A673 (cell line): ENCODE measurements at regions of chr6 and their contacts with region 1.

Region 1: GRCh38 chr6:31541658-31542521 is at the start of gene DDX39B:
- DNase-seq: peak; percentile 99
- H3K4me3 ChIP-seq: peak within 1 kb of the TSS; percentile 87
- H3K27ac ChIP-seq: peak within 1 kb of the TSS; percentile 99
- H3K4me1 ChIP-seq: peaks cover 16% of the 10 kb centered on the region
- H3K27me3 ChIP-seq: no peaks in the 10 kb centered on the region
- CTCF ChIP-seq: no peak
- total RNA-seq, gene DDX39B: 558 and 594 TPM in 2 replicates

Region 2: DNA sequence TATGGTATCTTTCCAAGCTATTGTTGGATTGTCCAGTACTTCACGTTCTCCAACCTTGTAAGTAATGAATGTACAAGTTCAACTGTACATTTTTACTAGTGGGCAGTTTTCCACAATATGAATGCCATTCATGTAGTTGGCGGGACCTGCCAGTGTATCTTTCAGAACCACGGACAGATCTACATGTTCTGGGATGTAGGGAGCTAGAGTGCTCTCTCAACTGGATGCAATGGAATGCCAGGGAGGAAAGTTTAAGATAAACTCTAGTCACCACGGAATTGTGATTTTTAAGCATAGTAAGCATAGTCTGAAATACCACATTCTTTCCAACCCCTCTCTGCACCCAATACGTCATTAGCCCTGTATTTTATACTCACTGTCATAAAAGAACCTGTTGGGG is 248.5 kb before region 1 on chr6:
- CTCF ChIA-PET with region 1: no interaction called
- POLR2A ChIA-PET with region 1: no interaction called
- intact Hi-C with region 1: no loop called
- DNase-seq: peak; percentile 49
- H3K4me3 ChIP-seq: no peak overlapping the region
- H3K27ac ChIP-seq: no peak overlapping the region
- H3K4me1 ChIP-seq: no peaks in the 10 kb centered on the region
- H3K27me3 ChIP-seq: peaks cover 73% of the 10 kb centered on the region
- CTCF ChIP-seq: no peak

Region 3: GRCh38 chr6:31453259-31453658 is 88.6 kb before region 1 on chr6:
- CTCF ChIA-PET with region 1: no interaction called
- POLR2A ChIA-PET with region 1: no interaction called
- intact Hi-C with region 1: no loop called
- DNase-seq: peak; percentile 31
- H3K4me3 ChIP-seq: no peak overlapping the region
- H3K27ac ChIP-seq: no peak overlapping the region
- H3K4me1 ChIP-seq: no peaks in the 10 kb centered on the region
- H3K27me3 ChIP-seq: no peaks in the 10 kb centered on the region
- CTCF ChIP-seq: no peak

Region 4: DNA sequence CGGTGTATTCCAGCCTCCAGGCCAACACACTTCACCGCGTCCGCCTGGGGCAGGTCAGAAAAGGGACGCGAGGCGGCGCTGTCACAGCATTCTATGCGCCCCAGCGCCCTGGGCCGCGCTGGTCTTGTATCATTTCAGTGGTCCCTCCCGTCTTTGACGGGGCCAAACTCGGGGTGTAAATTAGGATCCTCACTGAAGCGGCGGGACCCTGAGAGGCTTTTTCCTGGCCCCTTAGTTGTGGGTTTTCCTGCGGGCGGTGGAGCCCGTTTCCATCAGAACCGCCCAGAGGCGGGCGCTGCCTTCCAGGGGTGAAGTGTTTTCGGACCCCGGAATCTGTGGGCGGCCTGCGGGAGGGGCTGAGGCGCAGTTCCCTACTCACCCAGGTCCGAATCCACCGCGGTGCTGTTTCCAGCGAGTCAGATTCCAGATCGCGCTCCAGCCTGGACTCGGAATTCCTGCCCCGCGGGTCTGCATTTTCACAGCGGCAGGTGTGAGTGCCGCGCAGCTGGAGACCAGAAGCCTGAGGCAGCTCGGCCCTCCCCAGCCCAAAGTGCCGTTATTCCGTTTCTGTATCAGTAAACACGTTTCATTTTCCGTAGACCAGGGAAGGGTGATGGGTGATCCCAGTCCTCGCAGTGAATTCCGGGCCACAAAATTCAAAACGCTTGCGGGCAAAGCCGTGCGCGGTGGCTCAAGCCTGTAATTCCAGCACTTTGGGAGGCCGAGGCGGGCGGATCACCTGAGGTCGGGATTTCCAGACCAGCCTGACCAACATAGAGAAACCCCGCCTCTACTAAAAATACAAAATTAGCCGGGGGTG is 47.8 kb before region 1 on chr6:
- CTCF ChIA-PET with region 1: no interaction called
- POLR2A ChIA-PET with region 1: interaction called, 4 read pairs
- intact Hi-C with region 1: loop called (anchors 5 kb)
- DNase-seq: peak; percentile 91
- H3K4me3 ChIP-seq: peak overlapping the region; percentile 78
- H3K27ac ChIP-seq: peak overlapping the region; percentile 64
- H3K4me1 ChIP-seq: peaks cover 7% of the 10 kb centered on the region
- H3K27me3 ChIP-seq: no peaks in the 10 kb centered on the region
- CTCF ChIP-seq: peak; percentile 98

Region 5: DNA sequence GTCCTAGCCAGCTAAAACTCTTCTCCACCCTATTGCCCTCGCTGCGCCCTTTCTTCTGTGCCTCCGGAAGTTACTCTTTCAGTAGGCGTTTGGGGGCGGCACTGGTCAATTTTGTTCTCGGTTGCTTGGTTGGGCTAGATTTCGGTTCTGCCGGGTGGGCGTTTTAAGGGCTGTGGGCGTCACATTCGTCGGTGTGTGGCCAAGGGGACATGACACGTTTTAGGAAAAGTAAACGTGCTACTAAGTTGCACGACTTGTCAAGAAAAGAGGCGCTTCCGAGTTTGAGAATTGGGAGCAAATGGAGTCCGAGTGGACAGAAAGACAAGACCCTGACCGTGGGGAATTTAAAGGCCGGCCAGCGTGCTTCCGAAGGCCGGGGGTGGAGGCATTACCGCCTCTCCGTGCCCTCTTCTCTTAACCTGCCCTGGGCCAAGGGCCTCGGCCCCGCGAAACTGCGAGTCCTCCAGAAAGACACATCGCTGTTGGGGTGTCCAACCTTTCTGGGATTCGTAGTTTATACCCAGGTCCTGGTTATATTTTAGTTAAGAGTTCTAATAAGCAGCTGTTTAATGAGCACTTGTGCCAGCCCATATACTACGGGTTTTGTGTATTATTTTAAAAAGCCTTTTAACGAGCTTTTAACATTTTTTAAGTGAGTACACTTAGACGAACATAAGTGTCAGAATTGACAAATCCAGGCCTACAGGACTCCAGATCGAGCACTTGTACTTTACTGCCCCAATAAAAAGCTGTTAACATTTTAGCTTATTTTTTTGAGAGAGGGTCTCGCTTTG is 111.2 kb after region 1 on chr6:
- CTCF ChIA-PET with region 1: no interaction called
- POLR2A ChIA-PET with region 1: no interaction called
- intact Hi-C with region 1: loop called (anchors 10 kb)
- DNase-seq: peak; percentile 95
- H3K4me3 ChIP-seq: peak overlapping the region; percentile 63
- H3K27ac ChIP-seq: peak overlapping the region; percentile 97
- H3K4me1 ChIP-seq: peaks cover 14% of the 10 kb centered on the region
- H3K27me3 ChIP-seq: no peaks in the 10 kb centered on the region
- CTCF ChIP-seq: peak; percentile 30; the same call in 1 of the 2 replicates

Region 6: GRCh38 chr6:31739639-31740396 is 197.9 kb after region 1 on chr6 and contains the start of gene MSH5:
- CTCF ChIA-PET with region 1: no interaction called
- POLR2A ChIA-PET with region 1: no interaction called
- intact Hi-C with region 1: loop called (anchors 10 kb)
- DNase-seq: peak; percentile 100
- H3K4me3 ChIP-seq: peak within 1 kb of the TSS; percentile 71
- H3K27ac ChIP-seq: peak within 1 kb of the TSS; percentile 95
- H3K4me1 ChIP-seq: peaks cover 36% of the 10 kb centered on the region
- H3K27me3 ChIP-seq: no peaks in the 10 kb centered on the region
- CTCF ChIP-seq: no peak
- total RNA-seq, gene MSH5: 76.4 and 102 TPM in 2 replicates

Region 7: GRCh38 chr6:31784098-31784925 is 242.4 kb after region 1 on chr6:
- CTCF ChIA-PET with region 1: no interaction called
- POLR2A ChIA-PET with region 1: no interaction called
- intact Hi-C with region 1: no loop called
- DNase-seq: no peak
- H3K4me3 ChIP-seq: no peak overlapping the region
- H3K27ac ChIP-seq: no peak overlapping the region
- H3K4me1 ChIP-seq: no peaks in the 10 kb centered on the region
- H3K27me3 ChIP-seq: no peaks in the 10 kb centered on the region
- CTCF ChIP-seq: no peak

Region 8: GRCh38 chr6:31834434-31835198 is 292.7 kb after region 1 on chr6:
- CTCF ChIA-PET with region 1: no interaction called
- POLR2A ChIA-PET with region 1: no interaction called
- intact Hi-C with region 1: loop called (anchors 5 kb)
- DNase-seq: peak; percentile 90
- H3K4me3 ChIP-seq: peak overlapping the region; percentile 74
- H3K27ac ChIP-seq: peak overlapping the region; percentile 98
- H3K4me1 ChIP-seq: peaks cover 25% of the 10 kb centered on the region
- H3K27me3 ChIP-seq: no peaks in the 10 kb centered on the region
- CTCF ChIP-seq: no peak

Region 9: DNA sequence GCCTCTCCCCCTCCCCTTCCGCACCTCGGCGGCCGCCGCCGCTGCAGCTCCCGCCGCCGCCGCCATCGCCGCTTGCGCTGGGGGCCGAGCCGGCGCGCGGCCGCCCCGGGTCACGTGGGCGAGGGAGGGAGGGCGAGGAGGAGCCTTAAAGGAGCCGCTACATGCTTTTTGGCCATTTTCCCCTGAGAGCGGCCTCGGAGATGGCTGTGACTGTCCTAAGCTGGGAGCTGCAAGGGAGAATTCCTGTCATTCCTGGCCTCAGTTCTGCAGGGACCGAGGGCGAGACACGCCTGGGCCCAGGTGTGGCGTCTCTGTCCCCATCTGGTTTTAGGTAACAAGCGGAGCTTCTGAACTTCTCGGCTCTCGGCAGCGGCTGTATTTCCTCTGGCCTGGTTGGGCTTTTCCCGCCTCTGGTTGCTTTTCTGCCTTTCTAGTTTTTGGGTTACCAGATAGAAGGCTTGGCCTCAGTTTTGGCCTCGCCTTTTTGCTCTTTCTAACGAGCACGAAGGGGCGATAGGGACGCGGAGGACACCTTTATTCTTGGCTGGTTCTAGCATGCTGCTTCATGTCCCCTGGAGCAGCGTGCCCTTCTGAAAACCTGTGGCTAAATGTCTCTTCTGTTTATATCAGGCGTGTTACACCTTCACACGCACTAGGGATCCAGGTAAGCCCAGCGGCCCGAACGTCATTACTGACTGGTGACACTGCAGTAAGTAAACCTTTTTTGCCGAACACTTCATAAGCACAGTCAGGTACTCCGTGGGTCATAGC is 355.9 kb after region 1 on chr6 and contains the start of gene EHMT2:
- CTCF ChIA-PET with region 1: no interaction called
- POLR2A ChIA-PET with region 1: no interaction called
- intact Hi-C with region 1: loop called (anchors 10 kb)
- DNase-seq: peak; percentile 94
- H3K4me3 ChIP-seq: peak within 1 kb of the TSS; percentile 83
- H3K27ac ChIP-seq: peak within 1 kb of the TSS; percentile 82
- H3K4me1 ChIP-seq: peaks cover 27% of the 10 kb centered on the region
- H3K27me3 ChIP-seq: no peaks in the 10 kb centered on the region
- CTCF ChIP-seq: no peak
- total RNA-seq, gene EHMT2: 117 TPM in 2 replicates

Region 10: GRCh38 chr6:32108094-32108627 is 566.3 kb after region 1 on chr6:
- CTCF ChIA-PET with region 1: no interaction called
- POLR2A ChIA-PET with region 1: interaction called, 16 read pairs
- intact Hi-C with region 1: no loop called
- DNase-seq: peak; percentile 40
- H3K4me3 ChIP-seq: no peak overlapping the region
- H3K27ac ChIP-seq: no peak overlapping the region
- H3K4me1 ChIP-seq: peaks cover 14% of the 10 kb centered on the region
- H3K27me3 ChIP-seq: peaks cover 5% of the 10 kb centered on the region
- CTCF ChIP-seq: no peak